ENCODE measurements at regions of chr3 and their contacts with region 1.

Region 1: GRCh38 chr3:185176750-185177359 is 24.0 kb upstream of the C3orf70 start:
- DNase-seq: peak; percentile 40
- ATAC-seq: peak; percentile 70
- H3K4me3 ChIP-seq: no peak overlapping the region
- H3K27ac ChIP-seq: no peak overlapping the region
- H3K4me1 ChIP-seq: peaks cover 6% of the 10 kb centered on the region; the same call in 1 of the 2 replicates
- H3K27me3 ChIP-seq: peaks cover 12% of the 10 kb centered on the region
- CTCF ChIP-seq: peak; percentile 62
- POLR2A ChIP-seq: no peak
- RAD21 ChIP-seq: peak; percentile 57

Region 2: DNA sequence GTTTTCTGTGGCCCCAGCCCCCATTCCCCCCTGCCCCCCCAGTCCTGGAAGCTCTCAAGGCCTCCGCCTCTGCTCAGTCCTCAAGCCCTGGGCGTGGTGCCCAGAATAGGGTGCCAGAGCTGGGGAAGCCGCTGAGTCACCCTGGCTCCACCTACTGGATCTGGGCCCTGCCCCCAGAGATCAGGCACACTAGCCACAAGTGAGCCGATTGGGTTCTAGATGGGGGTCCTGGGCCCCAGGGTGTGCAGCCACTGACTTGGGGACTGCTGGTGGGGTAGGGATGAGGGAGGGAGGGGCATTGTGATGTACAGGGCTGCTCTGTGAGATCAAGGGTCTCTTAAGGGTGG is 856.8 kb before region 1 on chr3:
- CTCF ChIA-PET with region 1: no interaction called
- POLR2A ChIA-PET with region 1: no interaction called
- dilution Hi-C with region 1: no loop called
- in situ Hi-C with region 1: no loop called
- intact Hi-C with region 1: no loop called
- DNase-seq: peak; percentile 97
- ATAC-seq: peak; percentile 87
- H3K4me3 ChIP-seq: no peak overlapping the region
- H3K27ac ChIP-seq: peak overlapping the region; percentile 75
- H3K4me1 ChIP-seq: peaks cover 25% of the 10 kb centered on the region
- H3K27me3 ChIP-seq: no peaks in the 10 kb centered on the region
- CTCF ChIP-seq: no peak
- POLR2A ChIP-seq: no peak
- RAD21 ChIP-seq: no peak

Region 3: DNA sequence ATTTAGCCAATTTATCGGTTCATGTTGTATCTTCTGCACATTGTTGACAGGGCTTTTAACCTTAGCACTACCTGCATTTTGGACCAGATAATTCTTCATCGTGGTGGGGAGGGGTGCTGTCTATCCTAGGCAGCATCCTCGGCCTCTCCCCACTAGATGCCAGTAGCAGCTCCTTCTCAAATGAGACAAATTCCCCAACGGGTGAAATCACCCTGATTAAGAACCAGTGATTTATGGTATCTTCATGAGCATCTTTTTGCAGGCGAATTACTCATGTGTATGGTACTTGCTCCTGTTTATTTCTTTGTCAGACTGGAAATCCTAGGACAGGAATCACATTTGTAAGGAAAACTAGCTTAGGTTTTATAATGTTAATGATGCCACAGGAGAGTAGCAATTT is 92.0 kb before region 1 on chr3:
- CTCF ChIA-PET with region 1: interaction called, 9 read pairs
- POLR2A ChIA-PET with region 1: no interaction called
- dilution Hi-C with region 1: no loop called
- in situ Hi-C with region 1: no loop called
- intact Hi-C with region 1: loop called (anchors 2 kb)
- DNase-seq: peak; percentile 77
- ATAC-seq: peak; percentile 77
- H3K4me3 ChIP-seq: no peak overlapping the region
- H3K27ac ChIP-seq: no peak overlapping the region
- H3K4me1 ChIP-seq: no peaks in the 10 kb centered on the region; the same call in 1 of the 2 replicates
- H3K27me3 ChIP-seq: no peaks in the 10 kb centered on the region
- CTCF ChIP-seq: peak; percentile 54
- POLR2A ChIP-seq: no peak
- RAD21 ChIP-seq: peak; percentile 61

Region 4: GRCh38 chr3:185508335-185508991 is 331.6 kb after region 1 on chr3:
- CTCF ChIA-PET with region 1: no interaction called
- POLR2A ChIA-PET with region 1: no interaction called
- dilution Hi-C with region 1: no loop called
- in situ Hi-C with region 1: no loop called
- intact Hi-C with region 1: no loop called
- DNase-seq: no peak
- ATAC-seq: no peak
- H3K4me3 ChIP-seq: no peak overlapping the region
- H3K27ac ChIP-seq: no peak overlapping the region
- H3K4me1 ChIP-seq: no peaks in the 10 kb centered on the region
- H3K27me3 ChIP-seq: peaks cover 10% of the 10 kb centered on the region
- CTCF ChIP-seq: no peak
- POLR2A ChIP-seq: no peak
- RAD21 ChIP-seq: no peak